ENCODE measurements at regions of chr17 and their contacts with region 1.

Region 1: DNA sequence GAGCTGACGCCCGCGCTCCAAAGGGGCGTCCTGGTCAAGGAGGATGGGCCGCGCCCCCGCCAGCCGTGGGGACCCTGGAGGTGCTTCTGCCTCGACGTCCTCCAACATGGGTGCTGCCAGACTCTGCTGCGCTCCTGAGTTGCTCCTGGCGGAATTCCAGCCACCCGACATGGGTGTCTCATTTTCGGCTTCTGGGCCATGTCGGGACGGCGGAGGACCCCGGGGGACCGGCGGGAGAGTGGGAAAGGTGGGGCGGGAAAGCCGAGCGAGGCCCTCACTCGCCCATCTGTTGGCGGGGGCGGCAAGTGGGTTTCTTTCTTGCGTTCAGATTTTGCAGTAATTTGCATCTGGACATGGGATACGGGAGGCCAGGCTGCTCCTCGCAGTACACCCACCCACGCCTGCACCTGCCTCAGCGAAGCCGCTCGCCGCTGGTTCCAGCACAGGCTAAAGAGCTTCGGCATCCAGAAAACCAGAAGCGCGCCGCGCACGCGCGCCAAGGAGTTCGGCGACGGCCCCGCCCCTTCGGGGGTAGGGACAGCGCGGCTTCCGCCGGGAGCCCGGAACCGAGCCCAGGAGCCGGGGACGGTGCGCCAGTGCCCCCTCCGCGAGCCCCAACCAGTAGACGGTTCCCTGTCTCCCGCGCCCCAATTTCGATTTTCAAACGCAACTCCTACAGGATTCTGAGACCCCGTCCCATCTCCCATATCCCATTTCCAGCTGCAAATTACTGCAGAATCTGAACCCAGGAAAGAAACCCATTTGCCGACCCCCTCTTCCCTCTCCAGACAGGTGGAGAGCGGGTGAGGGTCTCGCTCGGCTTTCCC is at the start of gene ARMC7:
- DNase-seq: peak; percentile 83 to 89 (median 85)
- H3K4me3 ChIP-seq: peak within 1 kb of the TSS; percentile 78 to 88 (median 80)
- H3K4me3 Mint-ChIP-seq: peak within 1 kb of the TSS; percentile 85 to 95
- H3K27ac ChIP-seq: peak within 1 kb of the TSS; percentile 10 to 70
- H3K27ac Mint-ChIP-seq: peak within 1 kb of the TSS; percentile 42 to 92 (median 86)
- H3K4me1 ChIP-seq: peaks cover 42 to 44% of the 10 kb centered on the region in 2 donors
- H3K4me1 Mint-ChIP-seq: peaks cover 44% of the 10 kb centered on the region
- H3K27me3 ChIP-seq: no peaks in the 10 kb centered on the region
- H3K27me3 Mint-ChIP-seq: peaks cover 0 to 6% (median 6%) of the 10 kb centered on the region in 3 donors
- CTCF ChIP-seq: no peak
- polyA plus RNA-seq, gene ARMC7: 1.3 to 11.8 (median 2.1) TPM

Region 2: GRCh38 chr17:74961657-74962490 is 147.7 kb before region 1 on chr17:
- intact Hi-C with region 1: no loop called
- DNase-seq: peak; percentile 75 to 82 (median 77)
- H3K4me3 ChIP-seq: no peak overlapping the region
- H3K4me3 Mint-ChIP-seq: no peak overlapping the region
- H3K27ac ChIP-seq: no peak overlapping the region
- H3K27ac Mint-ChIP-seq: peak overlapping the region in 1 of 7 donors; percentile 53
- H3K4me1 ChIP-seq: peaks cover 0 to 6% of the 10 kb centered on the region in 2 donors
- H3K4me1 Mint-ChIP-seq: peaks cover 7% of the 10 kb centered on the region
- H3K27me3 ChIP-seq: peaks cover 0 to 2% of the 10 kb centered on the region in 2 donors
- H3K27me3 Mint-ChIP-seq: peaks cover 8 to 42% (median 11%) of the 10 kb centered on the region in 3 donors
- CTCF ChIP-seq: peak; percentile 85

Region 3: GRCh38 chr17:75077496-75078283 is 31.9 kb before region 1 on chr17:
- intact Hi-C with region 1: loop called in 1 of 2 experiments (anchors 5 kb)
- DNase-seq: peak; percentile 56 to 74 (median 60)
- H3K4me3 ChIP-seq: peak overlapping the region; percentile 1 to 71 (median 23)
- H3K4me3 Mint-ChIP-seq: peak overlapping the region; percentile 75 to 89
- H3K27ac ChIP-seq: peak overlapping the region; percentile 14 to 73
- H3K27ac Mint-ChIP-seq: peak overlapping the region in 6 of 7 donors; percentile 25 to 87 (median 70)
- H3K4me1 ChIP-seq: peaks cover 61 to 63% of the 10 kb centered on the region in 2 donors
- H3K4me1 Mint-ChIP-seq: peaks cover 64% of the 10 kb centered on the region
- H3K27me3 ChIP-seq: no peaks in the 10 kb centered on the region
- H3K27me3 Mint-ChIP-seq: peaks cover 0 to 4% (median 1%) of the 10 kb centered on the region in 3 donors
- CTCF ChIP-seq: peak; percentile 43

Region 4: DNA sequence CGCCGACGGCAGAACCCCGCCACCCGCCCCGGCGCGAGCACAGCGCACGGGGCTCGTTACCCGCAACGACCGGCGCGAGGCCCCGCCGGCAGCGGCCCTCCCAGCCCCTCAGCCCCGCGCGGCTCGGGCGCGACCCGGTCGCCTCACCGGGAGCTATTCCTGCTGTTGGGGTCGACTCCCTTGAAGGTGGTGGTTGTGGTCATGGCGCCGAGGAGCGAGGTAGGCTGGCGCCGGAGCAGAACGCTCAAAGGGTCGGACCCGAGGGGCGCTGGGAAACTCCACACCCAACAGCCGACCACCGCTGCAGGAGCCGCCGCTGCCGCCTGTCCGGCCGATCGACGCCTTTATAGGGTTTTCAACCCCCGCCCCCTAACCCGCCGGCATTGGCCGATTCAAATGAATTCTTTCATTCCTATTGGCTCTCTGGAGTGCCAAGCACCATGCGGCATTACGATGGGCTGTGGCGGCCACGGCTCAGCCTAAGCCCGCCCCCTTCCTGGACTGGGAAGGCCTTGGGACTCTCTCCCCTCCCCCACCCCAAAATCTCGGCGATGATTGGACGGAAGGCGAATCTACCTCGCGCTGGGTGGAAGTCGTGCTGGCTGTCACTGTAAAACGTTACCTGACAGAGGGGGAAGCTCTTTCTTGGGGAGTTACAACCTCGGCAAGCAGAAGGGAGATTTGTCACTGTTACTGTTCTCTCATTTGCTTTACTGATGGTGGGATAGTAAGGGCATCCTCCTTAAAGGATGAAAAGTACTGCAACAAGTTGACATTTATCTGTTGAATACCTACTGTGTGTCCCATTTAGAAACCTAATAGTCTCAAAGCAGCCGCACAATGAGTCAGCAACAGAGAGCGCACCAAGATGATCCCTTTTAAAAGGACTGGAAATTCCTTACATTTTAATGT is 44.8 kb after region 1 on chr17 and contains the start of gene JPT1:
- intact Hi-C with region 1: loop called in 1 of 2 experiments (anchors 5 kb)
- DNase-seq: peak; percentile 97 to 99 (median 97)
- H3K4me3 ChIP-seq: peak within 1 kb of the TSS; percentile 61 to 97 (median 69)
- H3K4me3 Mint-ChIP-seq: peak within 1 kb of the TSS; percentile 94 to 95
- H3K27ac ChIP-seq: peak within 1 kb of the TSS in 1 of 2 donors; percentile 72
- H3K27ac Mint-ChIP-seq: peak within 1 kb of the TSS; percentile 75 to 90 (median 78)
- H3K4me1 ChIP-seq: peaks cover 14 to 22% of the 10 kb centered on the region in 2 donors
- H3K4me1 Mint-ChIP-seq: peaks cover 23% of the 10 kb centered on the region
- H3K27me3 ChIP-seq: no peaks in the 10 kb centered on the region
- H3K27me3 Mint-ChIP-seq: peaks cover 0 to 2% (median 0%) of the 10 kb centered on the region in 3 donors
- CTCF ChIP-seq: no peak
- polyA plus RNA-seq, gene JPT1: 79.7 to 181 (median 156) TPM

Region 5: GRCh38 chr17:75173526-75173925 is 63.9 kb after region 1 on chr17:
- intact Hi-C with region 1: loop called (anchors 2 to 5 kb)
- DNase-seq: no peak
- H3K4me3 ChIP-seq: no peak overlapping the region
- H3K4me3 Mint-ChIP-seq: no peak overlapping the region
- H3K27ac ChIP-seq: no peak overlapping the region
- H3K27ac Mint-ChIP-seq: peak overlapping the region in 2 of 7 donors; percentile 40 to 58
- H3K4me1 ChIP-seq: no peaks in the 10 kb centered on the region
- H3K4me1 Mint-ChIP-seq: peaks cover 2% of the 10 kb centered on the region
- H3K27me3 ChIP-seq: no peaks in the 10 kb centered on the region
- H3K27me3 Mint-ChIP-seq: no peaks in the 10 kb centered on the region
- CTCF ChIP-seq: no peak

Region 6: GRCh38 chr17:75205037-75205792 is 95.6 kb after region 1 on chr17 and contains the start of gene NUP85:
- intact Hi-C with region 1: loop called in 1 of 2 experiments (anchors 10 kb)
- DNase-seq: peak; percentile 82 to 83 (median 82)
- H3K4me3 ChIP-seq: peak within 1 kb of the TSS; percentile 59 to 93 (median 77)
- H3K4me3 Mint-ChIP-seq: peak within 1 kb of the TSS; percentile 91 to 96
- H3K27ac ChIP-seq: peak within 1 kb of the TSS; percentile 92 to 93
- H3K27ac Mint-ChIP-seq: peak within 1 kb of the TSS; percentile 94 to 99 (median 99)
- H3K4me1 ChIP-seq: peaks cover 19 to 25% of the 10 kb centered on the region in 2 donors
- H3K4me1 Mint-ChIP-seq: peaks cover 21% of the 10 kb centered on the region
- H3K27me3 ChIP-seq: no peaks in the 10 kb centered on the region
- H3K27me3 Mint-ChIP-seq: no peaks in the 10 kb centered on the region
- CTCF ChIP-seq: no peak
- polyA plus RNA-seq, gene NUP85: 36.3 to 94.2 (median 38.7) TPM

Measured in CD14-positive monocyte (primary cell).